Sigmoid colon (tissue), 7 donors: ENCODE measurements at regions of chr17 and their contacts with region 1.

Region 1: DNA sequence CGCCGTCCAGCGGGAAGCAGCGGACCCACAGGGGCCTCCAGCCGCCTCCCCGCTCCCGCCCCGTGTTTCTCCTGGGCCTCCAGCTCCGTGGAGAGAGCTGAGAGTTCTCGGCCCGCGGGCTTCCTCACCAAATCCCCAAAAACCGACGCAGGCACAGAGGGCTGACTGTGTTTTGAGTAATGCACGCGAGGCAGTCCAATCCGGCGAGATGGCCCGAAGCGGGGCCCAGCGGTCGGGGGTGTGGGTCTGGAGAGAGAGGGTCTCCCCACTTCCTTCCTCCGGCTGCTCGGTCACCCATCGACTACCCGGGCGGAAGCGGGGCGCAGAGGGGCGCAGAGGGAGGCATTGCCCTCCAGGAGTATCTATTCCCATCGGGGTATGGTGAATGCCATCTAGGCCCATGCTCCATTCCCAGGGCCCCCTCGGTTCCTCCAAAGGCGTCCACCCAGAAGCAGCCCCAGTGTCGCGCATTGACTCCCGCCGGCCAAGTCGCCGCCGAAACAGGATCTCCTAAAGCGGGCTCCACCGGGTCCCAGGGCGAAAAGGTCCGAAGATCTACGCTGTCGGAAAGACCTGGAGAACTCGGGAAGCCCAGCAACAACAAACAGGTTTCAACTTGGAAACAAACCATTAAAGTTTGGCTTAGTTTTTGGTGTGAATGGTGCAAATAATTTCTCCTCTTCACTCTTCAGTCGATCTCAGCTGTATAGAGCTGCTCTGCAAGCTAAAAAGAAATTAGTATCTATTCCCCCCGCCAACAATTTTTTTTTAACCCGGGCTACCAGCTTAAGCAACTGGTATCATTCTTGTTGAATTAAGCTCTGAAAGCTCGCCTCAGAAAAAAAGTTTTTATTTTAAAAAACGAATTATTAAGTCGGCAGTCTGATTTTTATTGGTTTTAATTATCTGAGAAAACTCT is 19.2 kb upstream of the HOXB13 start:
- DNase-seq: no peak
- H3K4me3 ChIP-seq: no peak overlapping the region
- H3K27ac ChIP-seq: no peak overlapping the region
- H3K4me1 ChIP-seq: peaks cover 0 to 10% (median 3%) of the 10 kb centered on the region in 4 donors
- H3K27me3 ChIP-seq: peaks cover 76 to 100% (median 99%) of the 10 kb centered on the region in 3 donors
- CTCF ChIP-seq: no peak
- EP300 ChIP-seq: no peak
- POLR2A ChIP-seq: no peak

Region 2: GRCh38 chr17:48718761-48719641 is 28.7 kb before region 1 on chr17:
- intact Hi-C with region 1: loop called (anchors 2 kb)
- DNase-seq: peak; percentile 54
- H3K4me3 ChIP-seq: peak overlapping the region in 2 of 4 donors; percentile 8 to 16
- H3K27ac ChIP-seq: peak overlapping the region in 2 of 4 donors; percentile 34 to 49
- H3K4me1 ChIP-seq: peaks cover 0 to 32% (median 28%) of the 10 kb centered on the region in 4 donors
- H3K27me3 ChIP-seq: peaks cover 68 to 97% (median 94%) of the 10 kb centered on the region in 3 donors
- CTCF ChIP-seq: no peak
- EP300 ChIP-seq: no peak
- POLR2A ChIP-seq: no peak

Region 3: GRCh38 chr17:48954300-48954755 is 206.6 kb after region 1 on chr17:
- intact Hi-C with region 1: no loop called
- DNase-seq: no peak
- H3K4me3 ChIP-seq: no peak overlapping the region
- H3K27ac ChIP-seq: no peak overlapping the region
- H3K4me1 ChIP-seq: no peaks in the 10 kb centered on the region
- H3K27me3 ChIP-seq: peaks cover 0 to 48% (median 11%) of the 10 kb centered on the region in 3 donors
- CTCF ChIP-seq: no peak
- EP300 ChIP-seq: no peak
- POLR2A ChIP-seq: no peak